CD8-positive, alpha-beta T cell (primary cell): ENCODE measurements at regions of chr9 and their contacts with region 1.

Region 1: GRCh38 chr9:123268240-123268949 is at the start of gene STRBP:
- DNase-seq: peak; percentile 87 to 96 (median 92)
- ATAC-seq: peak; percentile 89
- H3K4me3 ChIP-seq: peak within 1 kb of the TSS; percentile 72 to 88
- H3K4me3 Mint-ChIP-seq: peak within 1 kb of the TSS; percentile 79
- H3K27ac ChIP-seq: peak within 1 kb of the TSS; percentile 55 to 73
- H3K27ac Mint-ChIP-seq: peak within 1 kb of the TSS; percentile 67
- H3K4me1 ChIP-seq: peaks cover 19% of the 10 kb centered on the region
- H3K4me1 Mint-ChIP-seq: peaks cover 43% of the 10 kb centered on the region
- H3K27me3 ChIP-seq: no peaks in the 10 kb centered on the region
- H3K27me3 Mint-ChIP-seq: no peaks in the 10 kb centered on the region
- CTCF ChIP-seq: no peak
- total RNA-seq, gene STRBP: 10.2 to 12.6 TPM

Region 2: DNA sequence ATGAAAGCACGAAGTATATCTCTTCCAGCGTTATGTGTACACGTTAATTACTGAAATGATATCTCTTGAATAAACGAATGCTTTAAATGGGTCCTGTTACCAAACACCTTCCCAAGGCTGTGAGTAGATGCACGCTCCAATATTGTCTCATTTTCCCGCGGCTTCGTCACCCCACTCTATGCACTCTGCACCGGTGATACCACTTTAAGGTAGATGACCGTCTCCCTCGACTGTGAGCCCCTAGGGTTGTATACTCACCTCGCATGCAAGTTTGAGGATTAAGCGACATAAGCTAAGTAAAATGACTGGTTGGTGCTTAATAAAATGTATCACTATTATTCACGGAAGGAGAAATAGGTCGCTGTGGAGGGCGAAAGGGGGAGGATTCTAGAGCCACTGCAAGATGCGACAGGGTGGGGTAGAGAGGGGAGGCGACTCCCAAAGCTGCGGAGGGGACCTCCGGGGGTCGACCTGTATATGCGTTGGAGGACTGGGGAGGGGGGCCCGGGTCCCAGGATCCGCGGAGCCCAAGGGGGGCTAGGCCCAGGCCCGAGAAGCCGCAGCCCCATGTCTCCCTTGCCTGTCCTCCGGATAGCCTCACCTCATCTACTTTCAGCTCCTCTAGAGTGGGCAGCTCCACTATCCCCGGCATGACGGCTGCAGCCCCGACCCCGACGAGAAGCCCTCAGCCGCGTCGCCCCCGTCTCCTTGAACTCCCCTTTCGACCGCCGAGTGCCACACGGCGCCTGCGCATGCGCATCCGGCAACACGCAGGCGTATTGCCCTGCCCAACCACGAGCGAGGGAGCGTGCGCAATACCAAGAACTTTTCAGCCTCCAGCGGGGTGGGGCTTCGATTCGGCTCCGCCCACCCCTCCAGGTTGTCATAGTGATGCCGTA is 1109.1 kb before region 1 on chr9 and contains the starts of genes MORN5 and NDUFA8:
- CTCF ChIA-PET with region 1: no interaction called
- POLR2A ChIA-PET with region 1: no interaction called
- intact Hi-C with region 1: loop called (anchors 2 kb)
- DNase-seq: peak; percentile 90 to 98 (median 96)
- ATAC-seq: peak; percentile 96
- H3K4me3 ChIP-seq: peak within 1 kb of the TSS; percentile 68 to 99
- H3K4me3 Mint-ChIP-seq: peak within 1 kb of the TSS; percentile 99
- H3K27ac ChIP-seq: peak within 1 kb of the TSS; percentile 74 to 86
- H3K27ac Mint-ChIP-seq: peak within 1 kb of the TSS; percentile 98
- H3K4me1 ChIP-seq: peaks cover 27% of the 10 kb centered on the region
- H3K4me1 Mint-ChIP-seq: peaks cover 42% of the 10 kb centered on the region
- H3K27me3 ChIP-seq: no peaks in the 10 kb centered on the region
- H3K27me3 Mint-ChIP-seq: peaks cover 14% of the 10 kb centered on the region
- CTCF ChIP-seq: no peak
- total RNA-seq, gene MORN5: not detected
- total RNA-seq, gene NDUFA8: 5.7 to 7.0 TPM

Region 3: GRCh38 chr9:122904823-122905710 is 363.3 kb before region 1 on chr9 and contains the start of gene RC3H2:
- CTCF ChIA-PET with region 1: no interaction called
- POLR2A ChIA-PET with region 1: no interaction called
- intact Hi-C with region 1: loop called (anchors 2 to 10 kb)
- DNase-seq: peak; percentile 92 to 100 (median 97)
- ATAC-seq: peak; percentile 91
- H3K4me3 ChIP-seq: peak within 1 kb of the TSS; percentile 66 to 92
- H3K4me3 Mint-ChIP-seq: peak within 1 kb of the TSS; percentile 94
- H3K27ac ChIP-seq: peak within 1 kb of the TSS; percentile 67 to 94
- H3K27ac Mint-ChIP-seq: peak within 1 kb of the TSS; percentile 98
- H3K4me1 ChIP-seq: peaks cover 32% of the 10 kb centered on the region
- H3K4me1 Mint-ChIP-seq: peaks cover 26% of the 10 kb centered on the region
- H3K27me3 ChIP-seq: no peaks in the 10 kb centered on the region
- H3K27me3 Mint-ChIP-seq: no peaks in the 10 kb centered on the region
- CTCF ChIP-seq: no peak
- total RNA-seq, gene RC3H2: 77.6 to 79.5 TPM

Region 4: DNA sequence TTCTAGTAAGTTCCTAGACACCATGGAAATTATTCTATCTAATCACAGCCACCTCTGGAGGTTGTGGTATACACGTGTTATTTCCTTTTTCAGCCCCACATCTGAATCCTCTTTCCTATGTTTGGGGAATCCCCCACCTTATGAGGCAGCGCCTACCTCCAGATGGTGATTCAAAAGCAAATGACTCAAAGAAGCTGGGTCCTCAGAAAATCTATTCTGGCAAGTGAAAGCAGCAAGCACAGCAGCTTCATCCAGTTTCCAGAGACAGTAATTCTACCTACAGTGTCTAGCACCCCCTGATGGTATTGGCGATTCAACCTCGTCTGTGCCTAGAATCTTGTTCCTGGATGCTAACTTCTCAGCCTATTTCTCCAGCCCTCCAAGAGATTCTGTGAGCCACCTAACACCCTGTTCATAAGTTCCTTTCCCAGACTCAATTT is 43.0 kb before region 1 on chr9:
- CTCF ChIA-PET with region 1: no interaction called
- POLR2A ChIA-PET with region 1: no interaction called
- intact Hi-C with region 1: loop called in 1 of 2 experiments (anchors 5 kb)
- DNase-seq: peak in 8 of 9 experiments; percentile 24 to 76 (median 48)
- ATAC-seq: peak; percentile 88
- H3K4me3 ChIP-seq: no peak overlapping the region
- H3K4me3 Mint-ChIP-seq: no peak overlapping the region
- H3K27ac ChIP-seq: no peak overlapping the region
- H3K27ac Mint-ChIP-seq: peak overlapping the region; percentile 8
- H3K4me1 ChIP-seq: peaks cover 14% of the 10 kb centered on the region
- H3K4me1 Mint-ChIP-seq: peaks cover 21% of the 10 kb centered on the region
- H3K27me3 ChIP-seq: no peaks in the 10 kb centered on the region
- H3K27me3 Mint-ChIP-seq: no peaks in the 10 kb centered on the region
- CTCF ChIP-seq: peak; percentile 44

Region 5: DNA sequence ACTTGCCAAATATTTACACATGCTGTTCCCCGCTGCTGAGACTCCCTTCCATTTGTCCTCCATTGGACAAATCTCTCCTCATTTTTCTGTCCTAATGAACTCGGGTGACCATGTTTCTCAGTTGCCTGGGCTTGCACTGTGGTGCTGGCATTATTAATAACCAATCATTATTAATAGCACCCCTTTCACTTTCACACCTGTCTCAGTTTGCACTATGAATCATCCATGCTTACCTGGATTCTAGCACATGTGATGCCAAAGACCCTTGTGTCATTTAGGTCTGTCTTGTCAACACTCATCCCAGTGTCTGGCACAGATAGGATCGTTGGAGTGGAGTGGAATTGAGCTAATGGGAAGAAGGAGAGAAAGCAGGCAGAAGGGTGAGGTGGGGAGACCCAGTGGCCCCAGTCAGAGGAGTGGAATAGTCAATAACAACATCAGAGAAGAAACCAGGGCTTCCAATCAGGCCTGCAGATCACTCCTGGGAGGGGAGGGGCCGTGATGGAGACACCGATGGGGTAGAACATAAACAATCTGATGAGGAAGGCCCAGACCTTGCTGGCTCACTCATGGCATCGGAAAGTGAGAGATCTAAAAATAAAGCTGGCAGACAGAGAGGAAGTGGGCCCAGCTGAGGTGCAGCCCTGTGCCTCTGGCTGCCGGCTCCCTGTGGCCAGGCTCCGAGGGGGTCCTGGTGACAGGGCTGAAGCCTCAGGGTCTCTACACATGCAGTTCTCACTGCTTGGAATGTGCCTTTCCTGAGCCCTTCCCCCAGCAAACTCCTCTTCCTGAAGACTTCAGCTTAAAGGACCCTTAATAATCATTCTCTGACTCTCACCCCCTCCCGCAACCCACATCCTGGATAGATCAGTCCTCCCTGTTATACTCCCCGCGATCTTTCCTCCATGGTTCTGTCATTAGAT is 54.1 kb after region 1 on chr9:
- CTCF ChIA-PET with region 1: interaction called, 3 read pairs
- POLR2A ChIA-PET with region 1: interaction called, 3 read pairs
- intact Hi-C with region 1: loop called (anchors 1 to 2 kb)
- DNase-seq: peak; percentile 29 to 85 (median 71)
- ATAC-seq: peak; percentile 85
- H3K4me3 ChIP-seq: peak overlapping the region; percentile 26 to 30
- H3K4me3 Mint-ChIP-seq: peak overlapping the region; percentile 75
- H3K27ac ChIP-seq: peak overlapping the region; percentile 54 to 59
- H3K27ac Mint-ChIP-seq: peak overlapping the region; percentile 93
- H3K4me1 ChIP-seq: peaks cover 32% of the 10 kb centered on the region
- H3K4me1 Mint-ChIP-seq: peaks cover 44% of the 10 kb centered on the region
- H3K27me3 ChIP-seq: no peaks in the 10 kb centered on the region
- H3K27me3 Mint-ChIP-seq: no peaks in the 10 kb centered on the region
- CTCF ChIP-seq: no peak

Region 6: GRCh38 chr9:124415102-124415851 is 1146.9 kb after region 1 on chr9 and contains the start of gene PSMB7:
- CTCF ChIA-PET with region 1: no interaction called
- POLR2A ChIA-PET with region 1: no interaction called
- intact Hi-C with region 1: loop called in 1 of 2 experiments (anchors 10 kb)
- DNase-seq: peak; percentile 94 to 98 (median 98)
- ATAC-seq: peak; percentile 95
- H3K4me3 ChIP-seq: peak within 1 kb of the TSS; percentile 66 to 87
- H3K4me3 Mint-ChIP-seq: peak within 1 kb of the TSS; percentile 98
- H3K27ac ChIP-seq: peak within 1 kb of the TSS; percentile 61 to 74
- H3K27ac Mint-ChIP-seq: peak within 1 kb of the TSS; percentile 96
- H3K4me1 ChIP-seq: peaks cover 11% of the 10 kb centered on the region
- H3K4me1 Mint-ChIP-seq: peaks cover 39% of the 10 kb centered on the region
- H3K27me3 ChIP-seq: no peaks in the 10 kb centered on the region
- H3K27me3 Mint-ChIP-seq: no peaks in the 10 kb centered on the region
- CTCF ChIP-seq: peak; percentile 95
- total RNA-seq, gene PSMB7: 71.0 to 71.5 TPM